Mammary epithelial cell (primary cell): ENCODE measurements at regions of chr3 and their contacts with region 1.

Region 1: GRCh38 chr3:132029182-132029902 is 5.5 kb downstream of the CPNE4 start:
- DNase-seq: peak; percentile 74
- H3K4me3 ChIP-seq: no peak overlapping the region
- H3K27ac ChIP-seq: no peak overlapping the region
- H3K4me1 ChIP-seq: no peaks in the 10 kb centered on the region
- H3K27me3 ChIP-seq: peaks cover 7% of the 10 kb centered on the region
- CTCF ChIP-seq: peak; percentile 83 to 98

Region 2: GRCh38 chr3:130759699-130760338 is 1269.5 kb before region 1 on chr3:
- CTCF ChIA-PET with region 1: no interaction called
- dilution Hi-C with region 1: no loop called
- in situ Hi-C with region 1: no loop called
- intact Hi-C with region 1: loop called (anchors 10 kb)
- DNase-seq: peak; percentile 62
- H3K4me3 ChIP-seq: peak overlapping the region in 1 of 3 experiments; percentile 23
- H3K27ac ChIP-seq: peak overlapping the region; percentile 9
- H3K4me1 ChIP-seq: peaks cover 16% of the 10 kb centered on the region
- H3K27me3 ChIP-seq: no peaks in the 10 kb centered on the region
- CTCF ChIP-seq: peak; percentile 75 to 83

Region 3: DNA sequence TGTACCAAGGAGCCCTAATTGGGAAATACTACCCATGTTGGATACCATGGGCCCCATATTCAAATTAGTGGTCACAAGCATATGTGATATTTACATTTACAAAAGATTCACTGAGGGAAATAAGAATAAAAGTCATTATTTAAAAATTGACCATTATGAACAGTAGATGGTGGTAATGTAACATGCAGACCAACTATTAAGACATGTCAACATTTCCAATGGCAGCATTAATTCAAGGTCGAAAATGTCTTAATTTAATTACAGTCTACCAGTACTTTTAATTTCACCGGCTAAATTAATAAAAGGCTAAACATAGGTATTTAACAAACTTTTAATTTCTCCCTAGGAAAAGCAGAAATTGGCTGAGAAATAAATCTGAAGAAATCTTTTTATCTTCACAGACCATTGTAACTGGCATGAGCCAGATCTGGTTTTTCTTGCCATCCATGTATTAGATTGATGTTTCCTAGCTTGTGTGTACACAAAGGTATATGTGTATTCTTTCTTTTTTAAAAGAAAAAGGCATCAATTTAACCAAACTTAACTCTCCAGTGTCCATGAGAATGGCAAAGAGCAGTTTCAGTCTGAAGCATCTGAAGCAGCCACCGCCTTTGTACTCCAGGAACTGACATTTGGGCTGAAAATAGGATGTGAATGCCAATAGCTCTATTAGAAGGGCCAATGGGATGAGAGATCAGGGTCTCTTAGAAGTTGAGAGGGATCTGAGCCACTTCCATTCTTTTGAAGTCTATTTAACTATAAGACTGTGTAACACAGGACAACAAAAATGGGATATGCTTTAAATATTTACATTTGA is 976.1 kb before region 1 on chr3:
- CTCF ChIA-PET with region 1: no interaction called
- dilution Hi-C with region 1: no loop called
- in situ Hi-C with region 1: loop called in 1 of 2 experiments (anchors 25 kb)
- intact Hi-C with region 1: loop called (anchors 5 kb)
- DNase-seq: no peak
- H3K4me3 ChIP-seq: no peak overlapping the region
- H3K27ac ChIP-seq: no peak overlapping the region
- H3K4me1 ChIP-seq: no peaks in the 10 kb centered on the region
- H3K27me3 ChIP-seq: no peaks in the 10 kb centered on the region
- CTCF ChIP-seq: peak; percentile 23 to 33

Region 4: DNA sequence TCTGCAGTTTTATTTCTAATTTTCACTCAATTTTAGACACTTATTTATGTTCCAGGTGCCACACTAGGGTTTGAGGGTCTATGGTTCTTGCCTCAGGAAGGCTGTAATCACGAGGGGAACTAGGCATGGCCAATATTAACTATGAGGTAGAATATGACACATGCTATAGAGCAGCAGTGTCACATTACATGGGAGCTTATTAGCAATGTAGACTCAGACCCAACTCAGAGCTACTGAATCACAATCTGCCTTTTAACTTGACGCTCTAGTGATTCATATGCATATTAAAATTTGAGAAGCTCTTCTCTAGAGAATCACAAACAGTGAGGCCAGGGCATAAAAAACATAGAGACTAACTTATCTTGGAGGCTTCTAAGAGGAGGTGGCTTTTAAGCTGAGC is 493.7 kb before region 1 on chr3:
- CTCF ChIA-PET with region 1: no interaction called
- dilution Hi-C with region 1: no loop called
- in situ Hi-C with region 1: no loop called
- intact Hi-C with region 1: loop called (anchors 5 kb)
- DNase-seq: peak; percentile 76
- H3K4me3 ChIP-seq: no peak overlapping the region
- H3K27ac ChIP-seq: no peak overlapping the region
- H3K4me1 ChIP-seq: peaks cover 5% of the 10 kb centered on the region
- H3K27me3 ChIP-seq: no peaks in the 10 kb centered on the region
- CTCF ChIP-seq: no peak

Region 5: GRCh38 chr3:131804565-131805133 is 224.7 kb before region 1 on chr3:
- CTCF ChIA-PET with region 1: no interaction called
- dilution Hi-C with region 1: no loop called
- in situ Hi-C with region 1: loop called (anchors 10 to 25 kb)
- intact Hi-C with region 1: no loop called
- DNase-seq: no peak
- H3K4me3 ChIP-seq: no peak overlapping the region
- H3K27ac ChIP-seq: no peak overlapping the region
- H3K4me1 ChIP-seq: no peaks in the 10 kb centered on the region
- H3K27me3 ChIP-seq: peaks cover 2% of the 10 kb centered on the region
- CTCF ChIP-seq: no peak

Region 6: GRCh38 chr3:132090921-132091320 is 61.6 kb after region 1 on chr3:
- CTCF ChIA-PET with region 1: no interaction called
- dilution Hi-C with region 1: no loop called
- in situ Hi-C with region 1: no loop called
- intact Hi-C with region 1: no loop called
- DNase-seq: no peak
- H3K4me3 ChIP-seq: no peak overlapping the region
- H3K27ac ChIP-seq: no peak overlapping the region
- H3K4me1 ChIP-seq: no peaks in the 10 kb centered on the region
- H3K27me3 ChIP-seq: no peaks in the 10 kb centered on the region
- CTCF ChIP-seq: no peak